Heart left ventricle (tissue), 16 donors: ENCODE measurements at regions of chr11 and their contacts with region 1.

Region 1: DNA sequence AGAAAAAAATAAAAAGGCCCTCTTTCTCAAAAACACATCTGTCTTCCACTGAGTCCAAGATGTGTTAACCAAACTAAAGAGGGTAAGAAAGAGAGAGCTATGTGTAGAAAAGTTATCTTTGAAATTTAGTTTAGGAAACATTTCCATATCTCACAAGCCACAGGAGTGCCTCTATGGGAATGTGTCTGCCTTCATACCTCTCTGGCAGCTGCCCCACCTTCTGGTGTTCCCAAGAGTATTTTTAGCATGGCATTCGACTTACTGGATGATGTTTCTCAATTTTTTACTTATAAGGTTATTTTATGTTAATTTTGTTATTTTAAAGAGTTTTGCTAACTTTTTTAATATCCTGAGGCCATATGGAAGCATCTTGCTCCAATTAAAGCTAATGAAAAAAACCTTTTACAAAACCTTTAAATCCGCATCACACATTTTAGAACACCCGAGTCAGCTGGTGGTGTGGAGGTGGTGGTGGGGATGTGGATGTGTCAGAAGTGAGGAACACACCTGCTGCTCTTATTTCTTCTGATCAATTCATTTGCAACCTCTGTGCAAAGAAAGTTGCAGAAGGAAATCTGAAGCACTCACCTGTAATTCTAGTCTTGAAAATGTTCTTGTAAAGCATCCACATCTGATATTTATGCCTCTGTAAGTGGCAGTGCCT is 112.2 kb downstream of the NCAM1 start:
- DNase-seq: peak in 2 of 5 donors; percentile 24 to 44
- ATAC-seq: peak in 2 of 4 donors; percentile 48 to 55
- H3K4me3 ChIP-seq: no peak overlapping the region
- H3K27ac ChIP-seq: peak overlapping the region in 7 of 12 donors; percentile 8 to 59 (median 54)
- H3K4me1 ChIP-seq: peaks cover 0 to 44% (median 10%) of the 10 kb centered on the region in 12 donors
- H3K27me3 ChIP-seq: no peaks in the 10 kb centered on the region
- CTCF ChIP-seq: no peak
- POLR2A ChIP-seq: no peak

Region 2: DNA sequence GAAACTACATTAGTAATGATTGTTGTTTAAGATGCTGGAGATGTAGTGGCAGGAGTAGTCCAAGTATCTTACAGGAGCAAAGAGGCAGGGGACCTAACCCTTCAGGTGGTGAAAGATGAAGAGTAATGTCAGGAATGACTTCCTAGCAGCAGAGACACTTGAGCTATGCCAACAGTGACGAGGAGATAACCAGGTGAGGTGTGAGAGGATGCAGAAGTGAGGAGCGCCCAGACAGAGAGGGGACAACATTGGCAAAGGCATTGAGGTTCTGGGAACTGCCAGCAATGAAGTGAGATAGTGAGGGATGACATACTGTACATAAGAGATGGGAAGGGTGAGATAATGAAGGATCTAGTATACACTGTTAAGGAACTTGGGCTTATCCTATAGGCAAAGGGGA is 16.4 kb before region 1 on chr11:
- intact Hi-C with region 1: loop called in 1 of 10 experiments (anchors 2 kb)
- DNase-seq: no peak
- ATAC-seq: peak; percentile 50 to 85 (median 71)
- H3K4me3 ChIP-seq: no peak overlapping the region
- H3K27ac ChIP-seq: no peak overlapping the region
- H3K4me1 ChIP-seq: peaks cover 0 to 24% (median 0%) of the 10 kb centered on the region in 12 donors
- H3K27me3 ChIP-seq: no peaks in the 10 kb centered on the region
- CTCF ChIP-seq: no peak
- POLR2A ChIP-seq: no peak

Region 3: DNA sequence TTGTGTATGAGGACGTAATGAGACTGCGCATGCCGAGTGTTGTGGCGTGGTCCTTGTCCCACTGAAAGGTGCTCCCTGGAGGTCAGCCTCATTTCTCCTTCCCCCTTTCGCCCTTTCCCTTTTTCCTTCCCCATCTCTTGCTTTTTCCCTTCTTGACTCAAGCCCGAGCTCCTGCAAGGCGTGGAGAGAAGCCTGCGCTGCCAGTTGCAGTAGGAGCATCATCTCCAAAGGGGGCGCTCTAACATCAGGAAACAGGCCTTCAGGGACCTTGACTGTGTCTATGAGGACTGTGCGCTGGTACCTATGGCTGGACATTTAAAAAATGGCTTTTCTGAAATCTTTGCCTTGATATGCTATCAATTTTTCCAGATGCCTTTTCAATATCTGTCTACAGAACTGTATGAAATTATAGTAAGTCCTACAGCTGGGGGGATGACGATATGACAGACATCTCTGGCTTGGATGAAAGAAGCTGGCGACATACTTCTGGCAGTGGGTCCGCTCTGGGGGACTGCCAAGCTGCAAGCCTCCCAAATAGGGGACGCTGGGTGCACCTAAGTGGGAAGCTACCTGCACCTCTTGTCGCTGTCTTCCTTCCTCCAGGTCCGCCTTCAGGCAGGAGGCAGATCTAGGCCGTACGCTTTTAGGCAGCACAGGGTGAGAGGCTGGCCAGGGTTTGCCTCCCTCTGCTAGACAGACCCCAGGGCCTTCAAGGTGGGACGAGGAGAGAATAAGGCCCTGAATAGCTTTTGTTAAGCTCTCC is 1701.4 kb after region 1 on chr11:
- intact Hi-C with region 1: no loop called
- DNase-seq: peak in 4 of 5 donors; percentile 21 to 35 (median 26)
- ATAC-seq: peak; percentile 71 to 86 (median 80)
- H3K4me3 ChIP-seq: no peak overlapping the region
- H3K27ac ChIP-seq: peak overlapping the region in 1 of 12 donors; percentile 39
- H3K4me1 ChIP-seq: peaks cover 0 to 15% (median 8%) of the 10 kb centered on the region in 12 donors
- H3K27me3 ChIP-seq: no peaks in the 10 kb centered on the region
- CTCF ChIP-seq: peak; percentile 40 to 74 (median 58)
- POLR2A ChIP-seq: no peak